Activated CD4-positive, alpha-beta T cell treated with anti-CD3 and anti-CD28 coated beads, Interleukin-2, amount 10 ng/mL, durations not matched to agents 24 days and 14 days (primary cell): ENCODE measurements at regions of chr2 and their contacts with region 1.

Region 1: GRCh38 chr2:206765242-206766056 is at the starts of genes FASTKD2 and MDH1B:
- DNase-seq: peak; percentile 95
- H3K4me3 Mint-ChIP-seq: peak within 1 kb of the TSS; percentile 95
- H3K27ac Mint-ChIP-seq: peak within 1 kb of the TSS; percentile 99
- H3K4me1 Mint-ChIP-seq: peaks cover 29% of the 10 kb centered on the region
- H3K27me3 Mint-ChIP-seq: peaks cover 4% of the 10 kb centered on the region
- total RNA-seq, gene FASTKD2: 39.1 and 39.2 TPM in 2 replicates
- total RNA-seq, gene MDH1B: 0.12 and 0.47 TPM in 2 replicates

Region 2: DNA sequence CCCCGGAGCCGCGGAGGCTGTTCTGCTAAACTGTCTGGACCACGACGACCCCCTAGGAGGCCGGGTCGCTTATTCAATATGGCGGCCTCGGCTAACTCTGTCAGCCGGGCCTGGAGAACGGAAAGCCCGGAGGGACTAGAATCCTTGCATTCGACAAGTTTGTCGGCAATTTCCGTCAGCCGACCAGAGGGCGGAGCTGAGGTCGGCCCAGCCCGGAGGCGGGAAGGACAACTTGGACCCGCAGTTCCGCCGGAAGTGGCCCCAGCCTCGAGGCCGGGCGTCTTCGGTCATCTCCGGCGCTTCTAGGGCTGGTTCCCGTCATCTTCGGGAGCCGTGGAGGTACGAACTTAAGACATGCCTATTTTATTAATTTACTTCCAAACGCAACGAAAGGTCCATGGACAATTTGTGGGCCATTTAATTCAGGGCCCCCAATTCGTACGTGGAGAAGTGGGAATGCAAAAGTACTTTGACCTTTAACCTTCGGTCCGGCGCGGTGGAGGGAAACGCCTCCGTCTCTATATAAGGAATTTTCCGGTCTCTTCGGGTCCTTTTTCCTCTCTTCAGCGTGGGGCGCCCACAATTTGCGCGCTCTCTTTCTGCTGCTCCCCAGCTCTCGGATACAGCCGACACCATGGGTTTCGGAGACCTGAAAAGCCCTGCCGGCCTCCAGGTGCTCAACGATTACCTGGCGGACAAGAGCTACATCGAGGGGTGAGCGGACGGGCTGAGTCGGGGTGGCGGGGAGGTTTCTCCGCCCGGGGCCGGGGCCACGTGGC is 605.9 kb before region 1 on chr2 and contains the starts of genes EEF1B2 and NDUFS1:
- intact Hi-C with region 1: loop called (anchors 2 kb)
- DNase-seq: peak; percentile 99
- H3K4me3 Mint-ChIP-seq: peak within 1 kb of the TSS; percentile 97
- H3K27ac Mint-ChIP-seq: peak within 1 kb of the TSS; percentile 99
- H3K4me1 Mint-ChIP-seq: peaks cover 38% of the 10 kb centered on the region
- H3K27me3 Mint-ChIP-seq: no peaks in the 10 kb centered on the region
- total RNA-seq, gene EEF1B2: 761 and 768 TPM in 2 replicates
- total RNA-seq, gene NDUFS1: 81.5 and 82.6 TPM in 2 replicates

Region 3: DNA sequence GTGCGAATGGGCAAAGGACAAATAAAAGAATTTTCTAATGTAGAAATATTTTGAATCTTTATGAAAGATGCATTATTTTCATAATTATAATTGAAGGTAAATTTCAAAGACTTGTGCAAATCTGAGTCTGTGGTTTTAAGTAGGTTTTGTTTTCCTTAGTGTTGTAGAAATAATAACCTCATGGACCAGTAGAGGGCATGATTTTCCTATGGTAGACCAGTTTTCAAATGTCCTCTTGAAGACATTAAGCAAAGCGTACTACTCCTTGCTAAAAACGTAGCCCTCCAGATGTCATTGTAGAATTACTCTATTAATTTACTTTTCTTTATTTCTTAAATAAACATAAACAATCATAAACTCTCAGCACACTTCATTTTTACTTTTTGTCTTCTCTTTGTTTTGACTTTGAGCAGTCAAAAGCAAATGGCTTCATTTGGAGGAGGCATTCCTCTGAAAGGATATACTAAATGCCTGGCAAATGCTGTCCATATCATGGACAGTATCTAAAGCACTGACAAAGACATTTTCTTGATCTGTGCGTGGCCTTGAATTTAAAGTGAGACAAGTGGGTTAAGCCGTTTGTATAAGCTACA is 209.0 kb before region 1 on chr2:
- intact Hi-C with region 1: loop called (anchors 10 kb)
- DNase-seq: no peak
- H3K4me3 Mint-ChIP-seq: no peak overlapping the region
- H3K27ac Mint-ChIP-seq: no peak overlapping the region
- H3K4me1 Mint-ChIP-seq: peaks cover 14% of the 10 kb centered on the region
- H3K27me3 Mint-ChIP-seq: peaks cover 28% of the 10 kb centered on the region

Region 4: GRCh38 chr2:206683546-206683945 is 81.9 kb before region 1 on chr2:
- intact Hi-C with region 1: no loop called
- DNase-seq: no peak
- H3K4me3 Mint-ChIP-seq: no peak overlapping the region
- H3K27ac Mint-ChIP-seq: no peak overlapping the region
- H3K4me1 Mint-ChIP-seq: no peaks in the 10 kb centered on the region
- H3K27me3 Mint-ChIP-seq: peaks cover 13% of the 10 kb centered on the region

Region 5: GRCh38 chr2:206693399-206694137 is 71.9 kb before region 1 on chr2:
- intact Hi-C with region 1: loop called (anchors 5 kb)
- DNase-seq: peak; percentile 82
- H3K4me3 Mint-ChIP-seq: no peak overlapping the region
- H3K27ac Mint-ChIP-seq: no peak overlapping the region
- H3K4me1 Mint-ChIP-seq: no peaks in the 10 kb centered on the region
- H3K27me3 Mint-ChIP-seq: peaks cover 6% of the 10 kb centered on the region

Region 6: GRCh38 chr2:206780671-206781070 is 15.2 kb after region 1 on chr2:
- intact Hi-C with region 1: loop called (anchors 2 kb)
- DNase-seq: no peak
- H3K4me3 Mint-ChIP-seq: no peak overlapping the region
- H3K27ac Mint-ChIP-seq: no peak overlapping the region
- H3K4me1 Mint-ChIP-seq: peaks cover 23% of the 10 kb centered on the region
- H3K27me3 Mint-ChIP-seq: no peaks in the 10 kb centered on the region

Region 7: DNA sequence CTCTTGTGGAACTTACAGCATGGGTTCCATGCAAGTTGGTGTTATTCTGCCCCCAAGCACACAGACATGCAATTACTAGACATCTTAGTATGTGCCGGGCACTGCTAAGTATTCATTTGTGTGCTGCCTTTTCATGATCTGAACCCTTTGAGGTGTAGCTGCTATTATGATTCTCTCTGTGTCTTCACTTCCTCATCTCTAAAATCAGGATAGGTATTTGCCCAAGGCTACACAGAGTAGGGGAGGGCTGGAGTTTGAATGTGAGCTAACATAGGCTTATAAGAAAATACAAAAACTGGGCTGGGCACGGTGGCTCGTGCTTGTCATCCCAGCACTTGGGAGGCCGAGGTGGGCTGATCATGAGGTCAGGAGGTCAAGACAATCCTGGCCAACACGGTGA is 27.2 kb after region 1 on chr2:
- intact Hi-C with region 1: no loop called
- DNase-seq: no peak
- H3K4me3 Mint-ChIP-seq: no peak overlapping the region
- H3K27ac Mint-ChIP-seq: no peak overlapping the region
- H3K4me1 Mint-ChIP-seq: no peaks in the 10 kb centered on the region
- H3K27me3 Mint-ChIP-seq: no peaks in the 10 kb centered on the region

Region 8: GRCh38 chr2:207710814-207711740 is 945.6 kb after region 1 on chr2 and contains the start of gene CCNYL1:
- intact Hi-C with region 1: loop called (anchors 1 kb)
- DNase-seq: peak; percentile 99
- H3K4me3 Mint-ChIP-seq: peak within 1 kb of the TSS; percentile 100
- H3K27ac Mint-ChIP-seq: peak within 1 kb of the TSS; percentile 88
- H3K4me1 Mint-ChIP-seq: peaks cover 23% of the 10 kb centered on the region
- H3K27me3 Mint-ChIP-seq: no peaks in the 10 kb centered on the region
- total RNA-seq, gene CCNYL1: 6.1 and 8.7 TPM in 2 replicates